ENCODE measurements at regions of chr3 and their contacts with region 1.

Region 1: DNA sequence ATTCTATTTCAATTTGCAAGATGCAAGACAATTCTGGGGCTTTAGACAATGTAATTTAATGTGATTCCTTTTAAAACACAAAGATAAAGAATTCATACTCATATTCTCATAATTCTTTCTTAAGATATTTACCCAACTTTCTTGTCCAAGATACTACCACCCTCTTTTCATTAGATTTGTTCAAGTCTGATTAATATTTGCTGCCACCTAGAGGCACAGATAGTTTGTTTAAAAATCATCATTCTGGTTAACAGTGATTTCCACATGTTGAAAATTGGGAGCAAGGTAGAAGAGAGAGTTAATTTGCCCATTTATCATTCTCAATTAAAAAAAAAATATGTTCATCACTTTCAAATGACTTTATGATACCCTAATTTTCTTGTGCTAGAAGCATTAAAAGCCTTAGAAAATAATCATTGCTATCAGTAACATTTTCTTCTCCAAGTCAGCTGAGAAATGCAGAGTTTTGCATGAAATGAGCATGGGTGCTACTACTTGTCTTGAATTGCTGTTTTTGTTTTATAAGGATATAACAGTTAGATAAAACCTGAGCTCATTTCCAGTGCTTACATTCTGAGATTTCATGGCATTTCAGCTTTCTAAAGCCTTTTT is 11.6 kb downstream of the TAMM41 start:
- DNase-seq: no peak
- H3K4me3 ChIP-seq: no peak overlapping the region
- H3K27ac ChIP-seq: no peak overlapping the region
- H3K4me1 ChIP-seq: no peaks in the 10 kb centered on the region
- H3K27me3 ChIP-seq: no peaks in the 10 kb centered on the region
- CTCF ChIP-seq: peak; percentile 26 to 38 (median 32)
- EP300 ChIP-seq: no peak
- POLR2A ChIP-seq: no peak

Region 2: GRCh38 chr3:11385891-11386290 is 449.2 kb before region 1 on chr3:
- intact Hi-C with region 1: loop called in 1 of 4 experiments (anchors 10 kb)
- DNase-seq: no peak
- H3K4me3 ChIP-seq: no peak overlapping the region
- H3K27ac ChIP-seq: no peak overlapping the region
- H3K4me1 ChIP-seq: peaks cover 12% of the 10 kb centered on the region
- H3K27me3 ChIP-seq: no peaks in the 10 kb centered on the region
- CTCF ChIP-seq: no peak
- EP300 ChIP-seq: no peak
- POLR2A ChIP-seq: no peak

Region 3: GRCh38 chr3:11582191-11582968 is 252.8 kb before region 1 on chr3:
- intact Hi-C with region 1: loop called in 1 of 4 experiments (anchors 1 kb)
- DNase-seq: peak; percentile 80 to 86 (median 84)
- H3K4me3 ChIP-seq: peak overlapping the region; percentile 38
- H3K27ac ChIP-seq: peak overlapping the region; percentile 3 to 74
- H3K4me1 ChIP-seq: peaks cover 27% of the 10 kb centered on the region
- H3K27me3 ChIP-seq: no peaks in the 10 kb centered on the region
- CTCF ChIP-seq: no peak
- EP300 ChIP-seq: no peak
- POLR2A ChIP-seq: no peak

Region 4: DNA sequence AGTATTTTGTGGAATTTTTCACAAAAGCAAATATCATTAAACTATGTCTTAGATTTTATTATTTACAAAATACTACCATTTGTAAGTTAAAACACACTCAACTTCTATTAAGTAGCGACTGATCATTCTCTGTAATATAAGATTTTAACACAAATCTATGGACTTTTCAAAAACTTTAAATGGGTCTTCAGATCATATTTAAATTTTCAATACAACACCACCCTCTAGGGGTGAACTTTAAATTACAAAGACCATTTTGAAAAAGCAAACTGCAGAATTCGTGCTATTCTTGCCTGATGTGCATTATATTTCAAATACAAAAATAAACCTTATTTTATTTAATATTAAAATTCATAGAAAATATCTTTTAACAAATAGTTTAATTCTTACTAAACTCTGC is 183.2 kb before region 1 on chr3:
- intact Hi-C with region 1: loop called in 1 of 4 experiments (anchors 10 kb)
- DNase-seq: no peak
- H3K4me3 ChIP-seq: no peak overlapping the region
- H3K27ac ChIP-seq: no peak overlapping the region
- H3K4me1 ChIP-seq: no peaks in the 10 kb centered on the region
- H3K27me3 ChIP-seq: no peaks in the 10 kb centered on the region
- CTCF ChIP-seq: peak in 2 of 3 donors; percentile 33 to 55
- EP300 ChIP-seq: no peak
- POLR2A ChIP-seq: no peak

Region 5: GRCh38 chr3:11928381-11928780 is 93.2 kb after region 1 on chr3:
- intact Hi-C with region 1: no loop called
- DNase-seq: no peak
- H3K4me3 ChIP-seq: no peak overlapping the region
- H3K27ac ChIP-seq: no peak overlapping the region
- H3K4me1 ChIP-seq: no peaks in the 10 kb centered on the region
- H3K27me3 ChIP-seq: no peaks in the 10 kb centered on the region
- CTCF ChIP-seq: no peak
- EP300 ChIP-seq: no peak
- POLR2A ChIP-seq: no peak

Region 6: DNA sequence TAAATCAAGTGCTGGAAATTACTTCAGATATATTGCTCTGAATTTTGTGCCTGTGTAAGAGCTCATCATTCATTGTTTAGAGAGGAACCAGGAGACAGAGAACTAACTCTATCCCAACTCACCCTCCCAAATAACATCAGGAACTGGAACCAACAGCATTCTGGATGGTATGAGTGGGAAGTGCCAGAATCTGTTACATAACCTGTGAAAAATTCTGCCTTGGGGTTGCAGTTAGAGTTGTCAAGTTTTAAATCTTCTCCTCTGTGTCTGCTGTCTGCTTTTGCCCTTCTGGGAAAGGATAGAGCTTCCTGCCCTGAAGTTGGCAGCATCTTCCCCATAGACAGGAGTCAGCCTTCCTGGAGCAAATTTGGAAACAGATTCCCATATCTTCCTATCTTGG is 282.3 kb after region 1 on chr3:
- intact Hi-C with region 1: no loop called
- DNase-seq: no peak
- H3K4me3 ChIP-seq: no peak overlapping the region
- H3K27ac ChIP-seq: no peak overlapping the region
- H3K4me1 ChIP-seq: no peaks in the 10 kb centered on the region
- H3K27me3 ChIP-seq: no peaks in the 10 kb centered on the region
- CTCF ChIP-seq: no peak
- EP300 ChIP-seq: no peak
- POLR2A ChIP-seq: no peak